Right cardiac atrium (tissue), 5 donors: ENCODE measurements at regions of chr17 and their contacts with region 1.

Region 1: DNA sequence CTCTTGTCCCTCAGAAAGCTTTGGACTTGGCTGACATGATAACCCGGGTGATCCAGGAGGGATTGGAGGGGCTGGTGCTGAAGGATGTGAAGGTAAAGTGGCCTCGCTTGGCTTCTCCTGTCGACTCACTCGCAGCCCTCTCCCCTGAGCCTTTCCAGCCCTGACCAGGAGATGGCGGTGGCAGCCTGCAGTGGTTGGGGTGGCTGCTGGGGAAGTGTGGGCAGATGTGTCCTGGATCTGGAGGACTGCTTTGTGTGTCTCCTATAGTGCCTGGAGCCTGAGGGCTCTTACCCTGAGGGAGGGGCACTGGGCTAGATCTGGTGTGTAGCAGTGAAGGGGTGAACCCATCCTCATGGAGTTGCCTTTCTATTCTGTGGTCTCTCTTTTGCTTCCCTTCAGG is 17.9 kb downstream of the LIG3 start:
- DNase-seq: peak; percentile 43 to 82 (median 82)
- ATAC-seq: peak; percentile 81 to 82
- H3K4me3 ChIP-seq: no peak overlapping the region
- H3K27ac ChIP-seq: no peak overlapping the region
- H3K4me1 ChIP-seq: peaks cover 2% of the 10 kb centered on the region
- H3K27me3 ChIP-seq: no peaks in the 10 kb centered on the region

Region 2: DNA sequence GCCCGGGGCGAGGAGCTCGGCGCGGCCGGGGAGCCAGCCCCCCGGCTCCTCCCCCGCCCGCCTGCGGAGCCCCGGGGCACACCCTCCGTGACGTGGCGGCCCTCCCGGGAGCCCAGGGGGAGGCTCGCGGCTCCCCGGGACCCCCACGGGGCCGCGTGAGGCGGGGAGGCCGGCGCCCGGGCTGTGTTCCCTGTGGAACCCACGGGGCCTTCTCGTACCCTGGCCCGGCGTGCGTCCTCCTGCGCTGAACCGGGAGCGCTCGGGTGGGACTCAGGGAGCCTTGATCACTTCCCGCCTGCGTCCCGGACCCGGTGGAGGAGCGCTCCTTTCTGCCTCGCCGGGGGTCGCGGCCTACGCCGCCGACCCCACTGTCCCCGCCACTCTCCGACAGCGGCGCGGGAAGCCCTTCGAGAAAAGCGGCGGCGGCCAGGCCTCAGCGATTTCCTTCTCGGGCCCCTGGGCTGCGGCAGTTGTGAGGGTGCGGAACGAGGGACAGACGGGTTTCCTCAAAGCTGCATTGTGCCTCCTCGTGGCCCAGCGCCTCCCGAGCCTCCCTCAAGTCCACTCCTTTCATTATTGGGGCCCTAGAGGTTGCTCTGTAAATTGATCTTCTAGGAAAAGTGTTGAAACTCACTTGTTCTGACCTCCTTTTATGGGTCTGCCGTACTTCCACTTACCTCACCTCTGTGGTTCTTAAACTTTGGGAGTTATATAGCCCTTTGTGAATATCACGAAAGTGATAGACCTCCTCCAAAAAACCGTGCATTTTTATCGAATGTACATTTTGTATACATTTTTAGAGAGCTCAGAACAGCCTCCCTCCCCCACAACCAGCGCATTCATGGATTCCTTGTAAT is 17.3 kb before region 1 on chr17:
- intact Hi-C with region 1: no loop called
- DNase-seq: peak; percentile 86 to 92 (median 91)
- ATAC-seq: peak; percentile 96
- H3K4me3 ChIP-seq: peak overlapping the region; percentile 92
- H3K27ac ChIP-seq: peak overlapping the region; percentile 98
- H3K4me1 ChIP-seq: no peaks in the 10 kb centered on the region
- H3K27me3 ChIP-seq: no peaks in the 10 kb centered on the region

Region 3: DNA sequence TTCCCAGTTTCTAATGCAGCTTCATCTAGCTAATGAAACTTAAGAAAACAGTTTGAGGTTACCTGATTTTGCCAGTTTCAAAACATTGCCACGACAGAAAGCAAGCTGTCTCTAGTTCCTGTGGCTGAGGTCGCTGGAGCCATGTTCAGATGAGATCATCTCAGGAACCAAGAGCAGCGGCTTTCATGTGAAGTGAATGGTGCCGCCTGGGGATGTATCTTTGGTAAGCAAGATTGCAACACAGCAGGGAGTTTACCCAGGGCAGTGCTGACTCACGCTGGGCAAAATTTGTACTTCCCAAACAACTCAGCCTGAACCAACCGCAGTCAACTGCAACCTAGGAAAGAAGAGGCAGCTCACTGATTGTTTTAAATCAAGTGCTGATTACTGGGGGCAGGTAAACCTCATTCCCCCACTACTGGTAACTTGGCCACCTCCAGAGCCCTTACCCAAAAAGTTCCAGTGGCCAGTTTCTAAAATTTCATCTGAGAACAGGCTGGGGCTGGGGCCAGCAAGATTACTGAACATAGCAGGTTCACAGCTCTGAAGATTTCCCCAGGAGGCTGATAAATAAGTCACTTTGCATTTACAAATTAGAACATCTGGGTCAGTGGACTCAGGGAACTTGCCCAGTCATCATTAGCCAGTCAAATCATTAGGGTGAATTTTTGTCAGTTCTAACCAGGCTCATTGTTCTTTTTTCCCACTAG is 65.5 kb after region 1 on chr17 and contains the start of gene RFFL:
- intact Hi-C with region 1: loop called in 1 of 4 experiments (anchors 10 kb)
- DNase-seq: peak; percentile 84 to 90 (median 88)
- ATAC-seq: peak; percentile 98 to 99
- H3K4me3 ChIP-seq: peak within 1 kb of the TSS; percentile 1
- H3K27ac ChIP-seq: peak within 1 kb of the TSS; percentile 97
- H3K4me1 ChIP-seq: peaks cover 2% of the 10 kb centered on the region
- H3K27me3 ChIP-seq: no peaks in the 10 kb centered on the region
- total RNA-seq, gene RFFL: 17.2 to 20.0 (median 18.4) TPM

Region 4: GRCh38 chr17:35088881-35089585 is 90.8 kb after region 1 on chr17:
- intact Hi-C with region 1: loop called in 2 of 4 experiments (anchors 5 to 10 kb)
- DNase-seq: peak; percentile 86 to 96 (median 96)
- ATAC-seq: peak; percentile 96 to 97
- H3K4me3 ChIP-seq: peak overlapping the region; percentile 62
- H3K27ac ChIP-seq: peak overlapping the region; percentile 66
- H3K4me1 ChIP-seq: peaks cover 2% of the 10 kb centered on the region
- H3K27me3 ChIP-seq: no peaks in the 10 kb centered on the region

Region 5: DNA sequence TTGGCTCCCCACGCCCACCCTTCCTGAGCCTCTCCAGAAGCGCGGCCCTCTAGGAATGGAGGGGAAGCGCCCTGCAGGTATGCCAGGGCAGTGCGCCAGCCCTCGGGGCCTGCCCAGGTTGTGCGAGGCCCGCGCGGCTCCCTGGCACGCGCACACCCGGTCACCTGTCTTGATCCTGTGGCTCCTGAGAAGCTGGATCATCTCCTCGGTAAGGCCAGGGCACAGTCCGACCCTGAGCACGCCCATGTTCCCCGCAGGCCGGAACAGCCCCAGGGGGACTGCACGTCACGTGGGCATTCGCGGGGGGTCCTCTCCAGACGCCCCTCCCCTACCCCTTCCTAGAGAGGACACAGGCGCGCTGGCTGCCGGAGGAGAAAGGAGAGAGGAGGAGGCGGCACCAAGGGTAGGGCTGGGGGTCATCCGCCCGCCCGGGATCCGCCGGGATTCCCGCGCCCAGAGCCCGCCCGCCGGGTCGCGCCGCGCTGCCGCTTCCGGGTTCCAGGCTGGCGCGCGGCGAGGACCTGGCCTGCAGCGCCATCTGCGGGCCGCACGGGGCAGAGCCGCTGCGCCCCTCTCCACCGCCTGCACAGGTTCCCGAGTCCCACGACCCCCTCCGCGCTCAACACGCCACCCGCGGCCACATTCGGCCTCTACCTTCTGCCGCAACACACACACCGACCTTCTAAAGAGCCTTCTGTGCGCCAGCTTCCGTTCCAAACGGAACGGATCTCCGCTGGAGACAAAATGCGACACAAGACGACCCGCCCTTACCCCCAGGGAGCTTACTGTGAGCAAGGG is 121.4 kb after region 1 on chr17 and contains the start of gene RAD51D:
- intact Hi-C with region 1: loop called in 2 of 4 experiments (anchors 5 to 10 kb)
- DNase-seq: peak; percentile 77 to 92 (median 91)
- ATAC-seq: peak; percentile 94 to 95
- H3K4me3 ChIP-seq: peak within 1 kb of the TSS; percentile 48
- H3K27ac ChIP-seq: peak within 1 kb of the TSS; percentile 4
- H3K4me1 ChIP-seq: peaks cover 3% of the 10 kb centered on the region
- H3K27me3 ChIP-seq: no peaks in the 10 kb centered on the region
- total RNA-seq, gene RAD51D: 5.8 to 7.1 (median 6.4) TPM

Region 6: DNA sequence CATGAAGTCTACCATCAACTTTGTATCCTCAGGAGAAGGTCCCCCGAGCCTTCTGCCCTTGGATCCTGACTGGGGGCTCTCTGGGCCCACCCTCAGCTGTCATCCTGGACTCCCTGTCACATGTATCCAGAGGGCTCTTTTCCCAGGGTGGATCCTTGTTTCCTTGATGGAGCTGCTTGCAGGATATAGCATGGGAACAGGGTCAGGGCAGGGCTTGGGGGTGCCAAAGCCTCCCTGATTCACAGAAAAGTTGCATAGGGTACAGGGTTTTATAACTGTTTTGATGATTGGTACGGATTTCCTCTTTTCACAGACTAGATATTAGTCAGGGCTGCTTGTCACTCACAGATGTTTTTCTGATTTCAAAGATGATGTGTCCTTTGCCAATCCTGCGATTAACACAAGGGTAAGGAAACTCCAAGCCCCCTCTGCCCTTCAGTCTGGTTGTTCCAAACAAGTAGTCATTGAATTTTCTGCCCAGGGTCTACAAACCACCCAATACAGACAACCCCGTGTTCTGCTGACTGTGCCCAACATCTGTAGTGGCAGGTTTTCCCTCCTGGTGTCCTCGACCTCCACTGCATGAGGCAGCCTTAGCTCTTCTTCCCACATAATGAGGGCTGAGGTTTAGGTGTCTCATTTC is 216.5 kb after region 1 on chr17:
- intact Hi-C with region 1: no loop called
- DNase-seq: no peak
- ATAC-seq: no peak
- H3K4me3 ChIP-seq: no peak overlapping the region
- H3K27ac ChIP-seq: peak overlapping the region; percentile 31
- H3K4me1 ChIP-seq: no peaks in the 10 kb centered on the region
- H3K27me3 ChIP-seq: no peaks in the 10 kb centered on the region